ENCODE measurements at regions of chr10 and their contacts with region 1.

Region 1: GRCh38 chr10:91298224-91298871 is 77.9 kb downstream of the PCGF5 start:
- DNase-seq: peak; percentile 93
- H3K4me3 Mint-ChIP-seq: peak overlapping the region; percentile 71
- H3K27ac Mint-ChIP-seq: no peak overlapping the region
- H3K4me1 Mint-ChIP-seq: peaks cover 8% of the 10 kb centered on the region
- H3K27me3 Mint-ChIP-seq: peaks cover 22% of the 10 kb centered on the region

Region 2: GRCh38 chr10:90389876-90390275 is 908.5 kb before region 1 on chr10:
- intact Hi-C with region 1: no loop called
- DNase-seq: no peak
- H3K4me3 Mint-ChIP-seq: no peak overlapping the region
- H3K27ac Mint-ChIP-seq: no peak overlapping the region
- H3K4me1 Mint-ChIP-seq: no peaks in the 10 kb centered on the region
- H3K27me3 Mint-ChIP-seq: no peaks in the 10 kb centered on the region

Region 3: GRCh38 chr10:91349381-91349780 is 51.0 kb after region 1 on chr10:
- intact Hi-C with region 1: no loop called
- DNase-seq: no peak
- H3K4me3 Mint-ChIP-seq: no peak overlapping the region
- H3K27ac Mint-ChIP-seq: no peak overlapping the region
- H3K4me1 Mint-ChIP-seq: peaks cover 3% of the 10 kb centered on the region
- H3K27me3 Mint-ChIP-seq: peaks cover under 1% of the 10 kb centered on the region

Region 4: GRCh38 chr10:91367127-91367531 is 68.8 kb after region 1 on chr10:
- intact Hi-C with region 1: loop called (anchors 1 kb)
- DNase-seq: no peak
- H3K4me3 Mint-ChIP-seq: no peak overlapping the region
- H3K27ac Mint-ChIP-seq: no peak overlapping the region
- H3K4me1 Mint-ChIP-seq: no peaks in the 10 kb centered on the region
- H3K27me3 Mint-ChIP-seq: peaks cover 9% of the 10 kb centered on the region

Region 5: DNA sequence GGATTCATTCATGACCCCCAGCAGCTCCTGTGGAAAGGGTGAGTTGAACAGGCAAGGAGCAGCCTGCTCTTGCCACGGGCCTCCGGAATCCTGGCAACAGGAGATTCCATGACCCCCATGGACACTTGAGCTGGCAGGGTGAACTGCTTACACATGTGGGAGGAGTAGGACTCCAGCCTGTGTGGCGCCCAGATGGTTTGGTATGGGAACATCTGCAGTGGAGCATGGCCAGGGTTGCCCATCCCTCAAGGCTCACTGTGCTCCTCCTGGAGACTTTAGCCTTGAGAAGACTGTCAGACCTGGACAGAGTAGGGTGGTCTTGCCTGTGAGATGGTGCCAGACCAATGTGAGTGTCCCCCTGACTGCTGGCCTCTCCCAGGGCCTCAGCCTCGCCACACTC is 168.8 kb after region 1 on chr10:
- intact Hi-C with region 1: no loop called
- DNase-seq: no peak
- H3K4me3 Mint-ChIP-seq: no peak overlapping the region
- H3K27ac Mint-ChIP-seq: no peak overlapping the region
- H3K4me1 Mint-ChIP-seq: no peaks in the 10 kb centered on the region
- H3K27me3 Mint-ChIP-seq: peaks cover 4% of the 10 kb centered on the region

Region 6: GRCh38 chr10:91758303-91759146 is 460.2 kb after region 1 on chr10:
- intact Hi-C with region 1: loop called (anchors 5 kb)
- DNase-seq: no peak
- H3K4me3 Mint-ChIP-seq: no peak overlapping the region
- H3K27ac Mint-ChIP-seq: no peak overlapping the region
- H3K4me1 Mint-ChIP-seq: peaks cover 5% of the 10 kb centered on the region
- H3K27me3 Mint-ChIP-seq: peaks cover 49% of the 10 kb centered on the region